ENCODE measurements at regions of chr18 and their contacts with region 1.

Region 1: GRCh38 chr18:55275039-55275901 is 312.7 kb downstream of the TCF4 start:
- DNase-seq: no peak
- CTCF ChIP-seq: no peak

Region 2: DNA sequence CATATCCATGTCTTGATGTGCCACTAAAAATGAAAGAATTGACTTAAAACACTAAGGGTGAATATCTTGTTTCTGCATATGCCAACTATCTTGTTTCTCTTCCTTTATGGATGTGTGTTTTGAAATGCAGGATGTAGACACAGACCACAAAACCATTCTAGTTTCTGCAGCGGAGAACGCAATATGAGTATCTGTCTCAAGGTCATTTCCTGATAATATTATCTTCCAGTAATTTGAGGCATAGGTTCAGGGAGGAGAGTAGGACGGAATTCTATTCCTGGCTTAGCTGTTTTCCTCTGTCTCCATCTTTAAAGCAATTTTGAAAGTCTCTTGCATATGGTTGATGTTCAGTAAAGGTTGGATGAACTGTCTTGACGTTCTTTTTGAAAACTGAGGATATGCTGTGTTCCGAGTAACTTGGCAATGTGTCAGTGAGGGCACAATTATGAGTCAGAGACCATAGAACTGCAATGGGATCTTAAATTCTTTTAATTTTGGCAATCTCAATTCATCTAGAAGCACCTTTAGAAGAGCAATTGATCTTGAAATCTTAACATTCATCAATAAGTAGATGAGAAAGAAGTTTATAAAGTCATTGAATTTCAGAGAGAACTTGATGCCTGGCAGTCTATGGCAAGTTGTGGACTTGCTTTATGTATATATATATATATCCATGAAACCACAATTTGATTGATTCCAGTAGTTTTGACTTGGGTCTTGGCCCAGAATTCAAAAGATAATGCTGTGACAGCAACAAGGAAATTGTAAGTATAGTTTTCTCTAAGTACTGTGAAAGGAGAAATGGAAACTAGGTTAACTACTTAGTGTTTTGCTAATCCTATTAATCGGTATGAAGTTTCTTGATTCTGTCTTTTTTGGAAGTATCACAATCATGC is 422.2 kb before region 1 on chr18:
- CTCF ChIA-PET with region 1: no interaction called
- POLR2A ChIA-PET with region 1: no interaction called
- DNase-seq: no peak
- CTCF ChIP-seq: no peak

Region 3: GRCh38 chr18:55251254-55251971 is 23.9 kb before region 1 on chr18:
- CTCF ChIA-PET with region 1: interaction called, 13 read pairs
- POLR2A ChIA-PET with region 1: no interaction called
- DNase-seq: no peak
- CTCF ChIP-seq: no peak

Region 4: GRCh38 chr18:55258088-55258487 is 17.2 kb before region 1 on chr18:
- CTCF ChIA-PET with region 1: interaction called, 10 read pairs
- POLR2A ChIA-PET with region 1: no interaction called
- DNase-seq: no peak
- CTCF ChIP-seq: no peak

Region 5: GRCh38 chr18:55287149-55287806 is 12.0 kb after region 1 on chr18:
- CTCF ChIA-PET with region 1: interaction called, 22 read pairs
- POLR2A ChIA-PET with region 1: no interaction called
- DNase-seq: no peak
- CTCF ChIP-seq: no peak

Region 6: GRCh38 chr18:55370936-55371335 is 95.7 kb after region 1 on chr18:
- CTCF ChIA-PET with region 1: no interaction called
- POLR2A ChIA-PET with region 1: no interaction called
- DNase-seq: no peak
- CTCF ChIP-seq: no peak

Region 7: DNA sequence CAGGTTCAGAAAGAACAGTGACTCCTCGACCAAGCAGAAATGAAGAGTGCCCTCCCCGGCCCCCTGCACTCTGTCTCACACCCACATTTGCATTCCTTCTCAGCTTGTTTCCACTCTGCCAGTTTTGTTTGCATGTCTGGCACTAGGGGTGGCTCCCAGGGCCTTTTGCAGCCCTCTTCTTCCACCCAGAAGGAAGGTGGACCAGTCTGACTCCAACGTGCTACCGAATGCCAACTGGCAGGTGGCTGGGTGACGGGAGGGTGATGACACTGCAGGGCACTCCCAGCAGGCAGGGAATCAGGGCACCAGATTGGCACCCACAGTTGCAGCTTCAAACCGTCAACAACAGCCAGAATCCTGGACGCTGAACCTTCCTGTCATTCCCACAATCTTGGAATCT is 992.1 kb after region 1 on chr18:
- CTCF ChIA-PET with region 1: no interaction called
- POLR2A ChIA-PET with region 1: no interaction called
- DNase-seq: no peak
- CTCF ChIP-seq: no peak

Measured in GM10248 (cell line).